ENCODE measurements at regions of chr10 and their contacts with region 1.

Region 1: GRCh38 chr10:47024399-47025252 is 113.4 kb downstream of the PTPN20 start:
- DNase-seq: peak; percentile 76 to 86
- ATAC-seq: peak; percentile 54
- H3K4me3 ChIP-seq: no peak overlapping the region
- H3K27ac ChIP-seq: no peak overlapping the region
- H3K4me1 ChIP-seq: no peaks in the 10 kb centered on the region
- H3K27me3 ChIP-seq: no peaks in the 10 kb centered on the region

Region 2: DNA sequence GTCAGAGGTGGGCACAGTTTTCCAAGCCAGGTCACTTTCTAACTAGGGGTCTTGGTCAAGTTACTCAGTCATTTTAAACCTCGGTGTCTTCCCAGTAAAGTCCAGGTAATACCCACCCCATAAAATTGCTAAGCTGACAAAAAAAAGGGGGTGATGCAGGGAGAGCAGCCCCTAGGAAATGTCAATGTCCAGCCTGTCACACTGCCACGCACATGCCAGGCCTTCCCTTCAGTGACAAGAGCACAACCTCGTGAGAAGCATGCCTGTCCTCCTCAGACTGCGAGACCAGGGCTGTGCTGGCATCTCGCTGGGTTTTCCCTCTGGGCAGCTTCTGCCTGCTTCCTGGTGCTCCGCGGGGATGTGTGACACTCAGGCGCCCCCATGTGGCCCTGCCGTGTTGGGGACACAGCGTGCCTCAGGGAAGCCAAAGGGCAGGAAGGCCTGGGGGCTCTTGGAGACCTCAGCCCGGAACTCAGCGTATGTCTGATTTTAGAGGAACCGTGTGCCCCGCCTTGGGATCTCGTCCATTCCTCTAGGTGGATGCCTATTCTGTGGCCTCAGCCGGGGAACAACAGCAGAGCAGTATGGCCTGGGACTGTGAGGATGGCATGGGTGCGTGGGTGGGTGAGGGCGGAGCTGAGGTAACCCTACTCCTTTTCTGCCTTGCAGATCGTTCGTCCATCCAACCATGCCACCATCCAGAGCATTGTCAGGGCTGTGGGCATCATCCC is 287.5 kb after region 1 on chr10:
- intact Hi-C with region 1: loop called (anchors 2 to 5 kb)
- DNase-seq: peak; percentile 90 to 95
- ATAC-seq: peak; percentile 92
- H3K4me3 ChIP-seq: no peak overlapping the region
- H3K27ac ChIP-seq: no peak overlapping the region
- H3K4me1 ChIP-seq: no peaks in the 10 kb centered on the region
- H3K27me3 ChIP-seq: no peaks in the 10 kb centered on the region

Region 3: GRCh38 chr10:47340608-47341170 is 316.1 kb after region 1 on chr10:
- intact Hi-C with region 1: loop called in 1 of 2 experiments (anchors 2 kb)
- DNase-seq: peak; percentile 67 to 89
- ATAC-seq: peak; percentile 74
- H3K4me3 ChIP-seq: no peak overlapping the region
- H3K27ac ChIP-seq: no peak overlapping the region
- H3K4me1 ChIP-seq: no peaks in the 10 kb centered on the region
- H3K27me3 ChIP-seq: no peaks in the 10 kb centered on the region